ENCODE measurements at regions of chr14 and their contacts with region 1.

Region 1: DNA sequence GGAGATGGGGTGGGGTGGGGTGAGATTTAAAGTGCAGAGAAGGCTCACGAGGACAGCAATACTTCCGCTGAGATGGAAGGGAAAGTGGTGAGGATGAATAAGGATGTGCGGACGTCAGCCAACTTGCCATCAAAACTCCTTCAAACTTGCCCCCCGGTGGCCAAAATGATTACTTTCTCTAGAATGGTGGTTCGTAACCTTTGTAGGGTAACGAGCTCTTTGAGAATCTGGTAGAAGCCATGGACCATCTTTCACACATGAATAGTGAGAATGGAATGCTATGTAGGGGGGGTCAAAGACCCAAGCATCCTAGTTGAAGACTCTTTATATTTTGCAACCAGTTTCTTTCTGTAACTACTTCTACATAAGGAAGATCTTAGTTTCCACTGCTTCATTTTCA is 245.9 kb upstream of the DDHD1 start:
- H3K4me3 ChIP-seq: no peak overlapping the region
- H3K27ac ChIP-seq: no peak overlapping the region
- H3K4me1 ChIP-seq: no peaks in the 10 kb centered on the region
- CTCF ChIP-seq: no peak

Region 2: GRCh38 chr14:53346988-53347387 is 52.1 kb before region 1 on chr14:
- CTCF ChIA-PET with region 1: interaction called, 10 read pairs
- POLR2A ChIA-PET with region 1: no interaction called
- H3K4me3 ChIP-seq: no peak overlapping the region
- H3K27ac ChIP-seq: no peak overlapping the region
- H3K4me1 ChIP-seq: no peaks in the 10 kb centered on the region
- CTCF ChIP-seq: no peak

Measured in HEK293 (cell line).